ENCODE measurements at regions of chr1 and their contacts with region 1.

Region 1: DNA sequence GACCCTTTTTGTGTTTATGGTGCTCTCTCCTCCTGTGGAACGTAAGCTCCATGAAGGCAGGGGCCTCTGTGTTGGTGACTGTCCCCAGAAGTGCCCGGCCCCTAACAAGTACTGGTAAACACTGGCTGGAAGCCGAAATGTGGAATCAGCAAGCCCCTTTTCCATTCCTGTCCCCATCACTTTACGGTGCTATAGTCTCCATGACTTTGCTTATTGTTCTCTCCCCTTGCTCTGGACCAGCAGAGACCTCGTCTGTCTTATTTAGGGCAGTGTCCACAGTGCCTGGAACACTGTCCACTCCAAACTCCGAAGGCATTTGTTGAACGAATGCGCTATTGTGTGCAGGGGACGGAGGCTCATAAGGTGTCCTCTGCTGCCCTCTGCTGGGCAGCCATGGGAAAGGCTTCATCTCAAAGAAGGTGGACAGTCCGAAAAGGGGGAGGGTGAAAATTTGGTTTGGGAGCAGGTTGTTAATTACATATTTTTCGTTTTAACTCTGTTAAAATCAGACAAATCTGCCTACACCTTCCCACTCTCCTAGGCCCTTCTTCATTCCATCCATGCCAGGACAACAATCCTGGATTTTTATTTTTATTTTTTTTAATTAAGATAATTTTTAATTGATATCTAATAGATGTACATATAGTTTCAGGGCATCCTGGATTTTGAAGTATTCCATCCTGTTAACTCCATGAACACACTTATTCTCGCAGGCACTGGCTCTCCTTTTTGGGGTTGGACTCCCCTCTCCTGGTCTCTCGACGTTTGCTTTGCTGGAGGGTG is 115.6 kb downstream of the PGBD5 start:
- DNase-seq: peak; percentile 72 to 85 (median 80)
- H3K4me3 ChIP-seq: peak overlapping the region in 1 of 59 donors; percentile 12
- H3K27ac ChIP-seq: peak overlapping the region in 24 of 59 donors; percentile 9 to 78 (median 55)
- H3K27me3 ChIP-seq: no peaks in the 10 kb centered on the region
- CTCF ChIP-seq: peak; percentile 72 to 99 (median 96)

Region 2: GRCh38 chr1:229270547-229271447 is 1039.8 kb before region 1 on chr1 and contains the start of gene RAB4A:
- intact Hi-C with region 1: loop called in 1 of 2 experiments (anchors 10 kb)
- DNase-seq: peak; percentile 60 to 91 (median 80)
- H3K4me3 ChIP-seq: peak within 1 kb of the TSS; percentile 60 to 94 (median 80)
- H3K27ac ChIP-seq: peak within 1 kb of the TSS in 58 of 59 donors; percentile 6 to 93 (median 82)
- H3K27me3 ChIP-seq: no peaks in the 10 kb centered on the region
- CTCF ChIP-seq: peak in 5 of 56 donors; percentile 6 to 46 (median 12)
- total RNA-seq, gene RAB4A: 64.3 to 117 (median 86.8) TPM

Region 3: DNA sequence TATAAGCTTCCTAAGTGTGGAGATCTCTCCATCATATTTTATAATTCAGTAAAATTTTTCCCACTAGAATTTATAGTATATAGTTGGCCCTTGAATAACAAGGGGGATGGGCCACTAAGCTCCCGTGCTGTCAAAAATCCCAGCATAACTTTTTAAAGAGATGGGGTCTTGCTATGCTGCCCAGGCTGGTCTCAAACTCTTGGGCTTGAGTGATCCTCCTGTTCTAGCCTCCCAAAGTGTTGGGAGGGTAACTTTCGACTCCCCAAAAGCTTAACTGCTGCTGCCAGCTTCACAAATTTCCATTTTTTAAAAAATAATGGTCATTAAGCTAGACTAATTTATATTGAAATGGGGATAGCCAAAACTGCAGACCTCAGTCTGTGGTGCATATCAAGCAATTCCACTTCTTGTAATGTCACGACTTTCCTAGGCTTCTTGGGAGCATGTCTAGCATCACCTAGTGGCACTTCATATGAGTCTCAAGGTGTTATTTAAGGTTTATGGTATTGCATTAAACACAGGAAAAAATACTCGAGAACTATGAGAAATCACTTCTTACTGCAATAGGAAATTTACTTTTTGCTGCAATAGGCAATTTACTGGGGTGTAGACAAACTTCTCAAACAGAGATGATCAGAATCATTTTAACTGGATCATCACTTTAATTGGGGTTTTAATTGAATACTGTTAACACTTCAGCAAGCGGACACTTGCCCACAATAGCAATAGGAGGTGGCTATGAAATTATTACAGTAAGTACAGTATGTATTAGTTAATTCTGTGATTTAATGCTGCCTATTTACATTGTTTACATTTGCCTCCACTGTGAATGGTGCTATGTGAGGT is 857.4 kb before region 1 on chr1:
- intact Hi-C with region 1: no loop called
- DNase-seq: no peak
- H3K4me3 ChIP-seq: no peak overlapping the region
- H3K27ac ChIP-seq: no peak overlapping the region
- H3K27me3 ChIP-seq: no peaks in the 10 kb centered on the region
- CTCF ChIP-seq: peak in 47 of 56 donors; percentile 17 to 62 (median 44)

Region 4: GRCh38 chr1:229514578-229515275 is 795.8 kb before region 1 on chr1:
- intact Hi-C with region 1: loop called in 1 of 2 experiments (anchors 10 kb)
- DNase-seq: peak; percentile 41 to 85 (median 70)
- H3K4me3 ChIP-seq: peak overlapping the region in 3 of 59 donors; percentile 6 to 22 (median 19)
- H3K27ac ChIP-seq: peak overlapping the region in 6 of 59 donors; percentile 2 to 46 (median 19)
- H3K27me3 ChIP-seq: no peaks in the 10 kb centered on the region
- CTCF ChIP-seq: peak; percentile 56 to 90 (median 82)

Region 5: GRCh38 chr1:229579059-229579673 is 731.4 kb before region 1 on chr1:
- intact Hi-C with region 1: loop called in 1 of 2 experiments (anchors 10 kb)
- DNase-seq: peak; percentile 41 to 94 (median 88)
- H3K4me3 ChIP-seq: peak overlapping the region in 57 of 59 donors; percentile 8 to 67 (median 42)
- H3K27ac ChIP-seq: peak overlapping the region; percentile 29 to 95 (median 87)
- H3K27me3 ChIP-seq: no peaks in the 10 kb centered on the region
- CTCF ChIP-seq: peak in 21 of 56 donors; percentile 2 to 49 (median 13)

Region 6: DNA sequence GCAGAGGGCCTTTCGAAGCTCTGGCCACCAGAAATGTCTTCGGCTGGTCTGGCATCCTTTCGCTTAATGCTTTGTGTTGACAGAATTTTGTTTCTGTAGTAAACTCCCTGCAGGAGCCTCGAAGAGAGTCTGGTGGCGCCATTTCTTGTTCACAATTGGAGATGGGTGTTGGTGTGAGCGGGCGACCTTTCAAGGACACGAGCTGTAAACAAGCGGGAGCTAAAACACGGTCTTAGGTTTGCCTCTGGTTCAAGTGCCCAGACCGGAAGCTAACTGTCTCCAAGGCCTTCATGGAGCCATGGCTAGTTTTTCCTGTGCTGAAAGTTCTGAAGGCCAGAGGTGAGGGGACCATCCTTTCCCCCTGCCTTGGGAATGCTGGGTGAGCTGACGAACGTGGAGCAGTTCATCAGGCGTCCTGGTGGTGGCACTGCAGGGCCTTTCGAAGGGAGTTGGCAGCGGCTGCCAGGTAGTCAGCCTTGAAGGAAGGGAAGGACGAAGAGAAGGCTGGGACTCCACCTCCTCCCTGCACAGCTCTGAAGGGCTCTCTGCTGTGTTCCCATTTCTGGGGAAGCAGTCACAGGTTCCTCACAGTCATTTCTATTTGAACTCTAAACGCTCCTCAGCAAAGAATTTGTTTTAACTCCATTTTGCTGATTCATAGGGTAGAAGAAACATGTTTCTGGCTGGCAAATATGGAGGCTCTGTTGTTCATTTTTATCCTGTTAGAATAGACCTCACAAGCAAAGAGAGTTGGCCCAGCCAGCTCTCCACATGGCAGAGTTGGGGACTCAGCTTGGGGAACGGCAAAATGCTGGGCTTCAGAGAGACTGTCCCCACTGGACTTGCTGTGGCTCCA is 649.3 kb before region 1 on chr1:
- intact Hi-C with region 1: loop called (anchors 1 to 5 kb)
- DNase-seq: peak; percentile 77 to 89 (median 86)
- H3K4me3 ChIP-seq: peak overlapping the region in 1 of 59 donors; percentile 13
- H3K27ac ChIP-seq: peak overlapping the region in 51 of 59 donors; percentile 4 to 79 (median 58)
- H3K27me3 ChIP-seq: no peaks in the 10 kb centered on the region
- CTCF ChIP-seq: peak; percentile 79 to 98 (median 94)

Region 7: GRCh38 chr1:229666585-229666984 is 644.0 kb before region 1 on chr1:
- intact Hi-C with region 1: loop called (anchors 1 to 5 kb)
- DNase-seq: no peak
- H3K4me3 ChIP-seq: peak overlapping the region in 1 of 59 donors; percentile 14
- H3K27ac ChIP-seq: peak overlapping the region in 54 of 59 donors; percentile 1 to 96 (median 84)
- H3K27me3 ChIP-seq: no peaks in the 10 kb centered on the region
- CTCF ChIP-seq: no peak

Region 8: GRCh38 chr1:230345139-230345885 is 34.7 kb after region 1 on chr1:
- intact Hi-C with region 1: loop called in 1 of 2 experiments (anchors 5 kb)
- DNase-seq: peak in 6 of 10 donors; percentile 59 to 76 (median 68)
- H3K4me3 ChIP-seq: peak overlapping the region in 4 of 59 donors; percentile 1 to 32 (median 22)
- H3K27ac ChIP-seq: peak overlapping the region; percentile 30 to 99 (median 96)
- H3K27me3 ChIP-seq: no peaks in the 10 kb centered on the region
- CTCF ChIP-seq: peak in 8 of 56 donors; percentile 10 to 40 (median 16)

Region 9: GRCh38 chr1:230661976-230662375 is 351.4 kb after region 1 on chr1:
- intact Hi-C with region 1: no loop called
- DNase-seq: peak in 1 of 10 donors; percentile 80
- H3K4me3 ChIP-seq: no peak overlapping the region
- H3K27ac ChIP-seq: peak overlapping the region in 1 of 59 donors; percentile 76
- H3K27me3 ChIP-seq: no peaks in the 10 kb centered on the region
- CTCF ChIP-seq: no peak

Region 10: GRCh38 chr1:230917284-230918135 is 606.9 kb after region 1 on chr1:
- intact Hi-C with region 1: no loop called
- DNase-seq: peak; percentile 66 to 92 (median 73)
- H3K4me3 ChIP-seq: peak overlapping the region in 1 of 59 donors; percentile 11
- H3K27ac ChIP-seq: peak overlapping the region in 55 of 59 donors; percentile 2 to 85 (median 70)
- H3K27me3 ChIP-seq: no peaks in the 10 kb centered on the region
- CTCF ChIP-seq: peak; percentile 35 to 86 (median 62)